Activated CD4-positive, alpha-beta memory T cell treated with anti-CD3 and anti-CD28 coated beads for 36 hours (primary cell): ENCODE measurements at regions of chr15 and their contacts with region 1.

Region 1: DNA sequence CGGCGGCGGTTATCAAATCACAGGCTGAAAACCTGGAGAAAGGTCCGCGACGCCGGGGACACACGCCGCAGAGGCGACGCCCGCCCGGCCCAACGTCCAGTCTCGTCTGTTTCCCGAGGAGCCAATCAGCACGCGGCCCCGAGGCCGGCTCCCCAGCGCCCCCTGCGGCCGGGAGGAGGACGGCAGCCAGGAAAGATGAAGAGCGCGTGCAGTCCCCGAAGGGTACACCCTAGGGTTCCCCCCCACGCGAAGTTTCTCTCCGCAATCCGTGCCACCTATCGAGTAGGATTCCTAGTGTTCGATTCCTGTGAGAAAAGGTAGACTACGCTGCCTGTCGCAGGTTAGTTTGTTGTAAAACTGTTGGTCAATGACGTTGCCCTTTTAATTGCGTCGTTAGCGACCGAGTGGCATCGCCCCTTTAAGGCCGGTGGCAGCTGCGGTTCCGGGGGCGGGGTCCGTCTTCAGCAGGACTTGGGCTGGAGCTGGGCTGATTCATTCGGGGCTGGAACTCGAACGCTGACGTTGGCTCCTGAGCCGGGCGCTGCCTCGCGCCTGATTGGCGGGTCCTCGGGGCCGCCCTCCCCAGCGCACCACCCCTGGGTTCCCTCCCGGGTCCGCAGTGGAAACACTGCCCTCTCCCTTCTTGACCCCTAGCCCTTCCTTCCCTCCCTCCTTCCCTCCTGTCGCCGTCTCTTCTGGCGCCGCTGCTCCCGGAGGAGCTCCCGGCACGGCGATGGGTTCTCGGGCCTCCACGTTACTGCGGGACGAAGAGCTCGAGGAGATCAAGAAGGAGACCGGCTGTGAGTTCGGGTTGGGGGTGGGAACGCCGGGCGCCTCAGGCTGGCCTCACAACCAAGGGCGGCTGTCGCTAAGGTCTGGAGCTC is at the starts of genes CHP1 and EXD1:
- DNase-seq: peak; percentile 98
- H3K4me3 Mint-ChIP-seq: peak within 1 kb of the TSS; percentile 89
- H3K27ac Mint-ChIP-seq: peak within 1 kb of the TSS; percentile 81
- H3K4me1 Mint-ChIP-seq: peaks cover 30% of the 10 kb centered on the region
- H3K27me3 Mint-ChIP-seq: no peaks in the 10 kb centered on the region
- total RNA-seq, gene CHP1: 46.3 to 48.7 TPM
- total RNA-seq, gene EXD1: not detected

Region 2: GRCh38 chr15:40941528-40942336 is 289.2 kb before region 1 on chr15:
- CTCF ChIA-PET with region 1: interaction called, 11 read pairs
- POLR2A ChIA-PET with region 1: no interaction called
- intact Hi-C with region 1: no loop called
- DNase-seq: peak; percentile 76
- H3K4me3 Mint-ChIP-seq: peak overlapping the region; percentile 77
- H3K27ac Mint-ChIP-seq: peak overlapping the region; percentile 61
- H3K4me1 Mint-ChIP-seq: peaks cover 31% of the 10 kb centered on the region
- H3K27me3 Mint-ChIP-seq: no peaks in the 10 kb centered on the region

Region 3: GRCh38 chr15:41116116-41116871 is 114.6 kb before region 1 on chr15 and contains the start of gene INO80:
- CTCF ChIA-PET with region 1: no interaction called
- POLR2A ChIA-PET with region 1: interaction called, 7 read pairs
- intact Hi-C with region 1: loop called (anchors 1 kb)
- DNase-seq: peak; percentile 98
- H3K4me3 Mint-ChIP-seq: peak within 1 kb of the TSS; percentile 91
- H3K27ac Mint-ChIP-seq: peak within 1 kb of the TSS; percentile 98
- H3K4me1 Mint-ChIP-seq: peaks cover 12% of the 10 kb centered on the region
- H3K27me3 Mint-ChIP-seq: no peaks in the 10 kb centered on the region
- total RNA-seq, gene INO80: 19.9 to 22.8 TPM

Region 4: GRCh38 chr15:41283653-41284426 is 52.9 kb after region 1 on chr15:
- CTCF ChIA-PET with region 1: interaction called, 4 read pairs
- POLR2A ChIA-PET with region 1: interaction called, 6 read pairs
- intact Hi-C with region 1: loop called (anchors 2 kb)
- DNase-seq: peak; percentile 98
- H3K4me3 Mint-ChIP-seq: peak overlapping the region; percentile 98
- H3K27ac Mint-ChIP-seq: peak overlapping the region; percentile 92
- H3K4me1 Mint-ChIP-seq: peaks cover 51% of the 10 kb centered on the region
- H3K27me3 Mint-ChIP-seq: peaks cover 2% of the 10 kb centered on the region

Region 5: DNA sequence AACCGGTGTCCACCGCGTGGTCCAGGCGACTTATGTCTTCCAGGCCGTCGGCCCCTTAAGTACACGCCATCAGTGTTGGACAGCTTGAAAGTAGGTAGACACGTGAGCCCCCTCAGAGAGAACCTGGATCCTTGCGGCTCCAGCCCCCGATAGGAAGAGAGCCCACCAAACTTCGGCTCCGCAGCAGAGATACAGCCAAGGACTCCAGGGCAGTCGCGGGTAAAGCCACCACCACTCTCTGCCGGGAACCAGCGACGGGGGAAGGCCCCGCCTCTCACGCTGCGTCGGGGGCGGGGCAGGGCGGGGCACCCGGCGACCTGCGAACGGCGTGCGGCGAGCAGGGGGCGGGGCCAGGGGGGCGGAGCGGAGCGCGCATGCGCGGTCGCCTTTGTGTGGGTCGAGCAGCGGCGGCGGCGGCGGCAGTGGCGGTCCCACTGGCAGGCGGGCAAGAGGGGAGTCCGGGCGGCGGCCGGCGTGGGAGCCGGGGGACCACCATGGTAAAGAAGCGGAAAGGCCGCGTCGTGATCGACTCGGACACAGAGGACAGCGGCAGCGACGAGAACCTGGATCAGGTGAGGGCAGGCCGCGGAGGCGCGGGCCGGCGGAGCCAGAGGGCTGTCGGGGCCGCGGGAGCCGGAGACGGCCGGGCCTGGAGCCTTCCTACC is 186.0 kb after region 1 on chr15 and contains the start of gene RTF1:
- CTCF ChIA-PET with region 1: interaction called, 3 read pairs
- POLR2A ChIA-PET with region 1: no interaction called
- intact Hi-C with region 1: loop called (anchors 10 kb)
- DNase-seq: peak; percentile 98
- H3K4me3 Mint-ChIP-seq: peak within 1 kb of the TSS; percentile 88
- H3K27ac Mint-ChIP-seq: peak within 1 kb of the TSS; percentile 83
- H3K4me1 Mint-ChIP-seq: peaks cover 40% of the 10 kb centered on the region
- H3K27me3 Mint-ChIP-seq: no peaks in the 10 kb centered on the region
- total RNA-seq, gene RTF1: 24.9 to 26.2 TPM